Naive thymus-derived CD4-positive, alpha-beta T cell (primary cell): ENCODE measurements at regions of chr11 and their contacts with region 1.

Region 1: DNA sequence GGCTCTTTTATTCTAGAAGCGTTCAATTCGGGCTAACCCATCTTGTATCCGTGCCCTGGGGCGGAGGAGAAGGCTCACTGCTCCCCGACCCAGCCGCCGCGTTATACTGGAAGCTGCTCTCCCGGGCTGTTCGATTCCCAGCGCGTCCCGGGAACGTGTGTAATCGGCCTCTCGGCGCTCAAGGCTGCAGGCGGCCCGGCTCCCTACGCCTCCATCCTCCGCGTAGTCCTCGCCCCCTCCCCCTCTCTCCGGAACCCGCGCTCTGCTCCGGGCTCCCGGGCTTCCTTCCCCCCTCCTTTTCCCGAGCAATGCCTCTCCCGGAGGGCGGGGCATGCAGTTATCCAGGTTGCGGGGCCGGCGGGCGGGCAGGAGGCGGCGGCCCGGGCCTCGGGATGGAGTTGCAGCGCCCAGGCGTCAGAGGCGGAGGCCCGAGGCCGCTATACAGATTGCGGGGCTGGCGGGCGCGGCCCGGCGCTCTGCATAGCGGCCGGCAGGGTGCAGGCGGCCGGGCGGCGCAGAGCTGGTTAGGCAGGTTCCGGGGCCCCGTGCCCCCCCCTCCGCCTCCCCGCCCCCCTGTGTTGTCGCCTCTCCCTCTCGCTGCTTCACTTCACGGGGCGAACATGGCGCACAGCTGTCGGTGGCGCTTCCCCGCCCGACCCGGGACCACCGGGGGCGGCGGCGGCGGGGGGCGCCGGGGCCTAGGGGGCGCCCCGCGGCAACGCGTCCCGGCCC is at the start of gene KMT2A:
- DNase-seq: peak; percentile 89 to 100 (median 96)
- ATAC-seq: peak; percentile 94
- H3K4me3 ChIP-seq: peak within 1 kb of the TSS; percentile 91
- H3K4me3 Mint-ChIP-seq: peak within 1 kb of the TSS; percentile 89 to 97 (median 96)
- H3K27ac ChIP-seq: peak within 1 kb of the TSS; percentile 99
- H3K27ac Mint-ChIP-seq: peak within 1 kb of the TSS; percentile 91 to 99 (median 95)
- H3K4me1 ChIP-seq: peaks cover 24 to 28% of the 10 kb centered on the region in 2 donors
- H3K4me1 Mint-ChIP-seq: peaks cover 36 to 45% (median 38%) of the 10 kb centered on the region in 7 donors
- H3K27me3 ChIP-seq: no peaks in the 10 kb centered on the region
- H3K27me3 Mint-ChIP-seq: peaks cover 0 to 8% (median 0%) of the 10 kb centered on the region in 5 donors
- total RNA-seq, gene KMT2A: 140 to 192 (median 161) TPM

Region 2: GRCh38 chr11:118287006-118287405 is 149.1 kb before region 1 on chr11:
- CTCF ChIA-PET with region 1: no interaction called
- POLR2A ChIA-PET with region 1: no interaction called
- intact Hi-C with region 1: no loop called
- DNase-seq: no peak
- ATAC-seq: no peak
- H3K4me3 ChIP-seq: no peak overlapping the region
- H3K4me3 Mint-ChIP-seq: no peak overlapping the region
- H3K27ac ChIP-seq: no peak overlapping the region
- H3K27ac Mint-ChIP-seq: no peak overlapping the region
- H3K4me1 ChIP-seq: peaks cover 0 to 10% of the 10 kb centered on the region in 2 donors
- H3K4me1 Mint-ChIP-seq: peaks cover 24 to 39% (median 31%) of the 10 kb centered on the region in 7 donors
- H3K27me3 ChIP-seq: no peaks in the 10 kb centered on the region
- H3K27me3 Mint-ChIP-seq: no peaks in the 10 kb centered on the region

Region 3: GRCh38 chr11:118304568-118305248 is 131.4 kb before region 1 on chr11 and contains the start of gene CD3E:
- CTCF ChIA-PET with region 1: no interaction called
- POLR2A ChIA-PET with region 1: interaction called, 4 read pairs
- intact Hi-C with region 1: loop called (anchors 2 kb)
- DNase-seq: peak; percentile 31 to 83 (median 79)
- ATAC-seq: peak; percentile 83
- H3K4me3 ChIP-seq: peak within 1 kb of the TSS; percentile 88
- H3K4me3 Mint-ChIP-seq: peak within 1 kb of the TSS; percentile 95 to 100 (median 99)
- H3K27ac ChIP-seq: peak within 1 kb of the TSS; percentile 92
- H3K27ac Mint-ChIP-seq: peak within 1 kb of the TSS; percentile 97 to 100 (median 100)
- H3K4me1 ChIP-seq: peaks cover 41 to 62% of the 10 kb centered on the region in 2 donors
- H3K4me1 Mint-ChIP-seq: peaks cover 54 to 91% (median 78%) of the 10 kb centered on the region in 7 donors
- H3K27me3 ChIP-seq: no peaks in the 10 kb centered on the region
- H3K27me3 Mint-ChIP-seq: no peaks in the 10 kb centered on the region
- total RNA-seq, gene CD3E: 392 to 706 (median 670) TPM

Region 4: GRCh38 chr11:118396097-118396501 is 40.0 kb before region 1 on chr11:
- CTCF ChIA-PET with region 1: interaction called, 4 read pairs
- POLR2A ChIA-PET with region 1: interaction called, 31 read pairs
- intact Hi-C with region 1: loop called (anchors 1 kb)
- DNase-seq: peak in 1 of 9 donors; percentile 25
- ATAC-seq: no peak
- H3K4me3 ChIP-seq: no peak overlapping the region
- H3K4me3 Mint-ChIP-seq: peak overlapping the region in 3 of 10 donors; percentile 30 to 72 (median 55)
- H3K27ac ChIP-seq: peak overlapping the region; percentile 49
- H3K27ac Mint-ChIP-seq: peak overlapping the region; percentile 58 to 100 (median 97)
- H3K4me1 ChIP-seq: peaks cover 26 to 43% of the 10 kb centered on the region in 2 donors
- H3K4me1 Mint-ChIP-seq: peaks cover 18 to 61% (median 29%) of the 10 kb centered on the region in 7 donors
- H3K27me3 ChIP-seq: no peaks in the 10 kb centered on the region
- H3K27me3 Mint-ChIP-seq: no peaks in the 10 kb centered on the region

Region 5: DNA sequence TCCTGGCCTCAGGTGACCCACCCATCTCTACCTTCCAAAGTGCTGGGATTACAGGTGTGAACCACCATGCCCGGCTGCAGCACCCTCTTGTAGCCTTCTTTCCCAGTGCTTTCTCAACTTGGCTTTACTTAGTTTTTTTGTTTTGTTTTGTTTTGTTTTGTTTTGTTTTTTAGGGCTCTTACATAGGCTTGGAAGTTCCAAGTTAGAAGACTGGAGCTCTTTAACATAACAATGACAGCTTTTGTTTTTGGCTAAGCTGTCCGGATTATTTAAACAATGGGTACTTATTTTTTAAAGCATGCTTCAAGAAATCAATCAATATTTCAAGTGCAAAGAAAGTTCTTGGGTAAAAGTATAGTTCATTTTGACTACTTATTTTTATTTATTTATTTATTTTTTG is 26.1 kb after region 1 on chr11:
- CTCF ChIA-PET with region 1: interaction called, 5 read pairs
- POLR2A ChIA-PET with region 1: interaction called, 10 read pairs
- intact Hi-C with region 1: loop called in 1 of 2 experiments (anchors 5 kb)
- DNase-seq: no peak
- ATAC-seq: no peak
- H3K4me3 ChIP-seq: no peak overlapping the region
- H3K4me3 Mint-ChIP-seq: peak overlapping the region in 2 of 10 donors; percentile 23 to 29
- H3K27ac ChIP-seq: no peak overlapping the region
- H3K27ac Mint-ChIP-seq: peak overlapping the region in 2 of 9 donors; percentile 62 to 75
- H3K4me1 ChIP-seq: peaks cover 3 to 11% of the 10 kb centered on the region in 2 donors
- H3K4me1 Mint-ChIP-seq: peaks cover 20 to 67% (median 55%) of the 10 kb centered on the region in 7 donors
- H3K27me3 ChIP-seq: no peaks in the 10 kb centered on the region
- H3K27me3 Mint-ChIP-seq: no peaks in the 10 kb centered on the region

Region 6: GRCh38 chr11:118560806-118561205 is 124.7 kb after region 1 on chr11:
- CTCF ChIA-PET with region 1: no interaction called
- POLR2A ChIA-PET with region 1: no interaction called
- intact Hi-C with region 1: no loop called
- DNase-seq: no peak
- ATAC-seq: no peak
- H3K4me3 ChIP-seq: no peak overlapping the region
- H3K4me3 Mint-ChIP-seq: no peak overlapping the region
- H3K27ac ChIP-seq: no peak overlapping the region
- H3K27ac Mint-ChIP-seq: peak overlapping the region in 1 of 9 donors; percentile 45
- H3K4me1 ChIP-seq: no peaks in the 10 kb centered on the region
- H3K4me1 Mint-ChIP-seq: peaks cover 9 to 25% (median 16%) of the 10 kb centered on the region in 7 donors
- H3K27me3 ChIP-seq: no peaks in the 10 kb centered on the region
- H3K27me3 Mint-ChIP-seq: no peaks in the 10 kb centered on the region

Region 7: DNA sequence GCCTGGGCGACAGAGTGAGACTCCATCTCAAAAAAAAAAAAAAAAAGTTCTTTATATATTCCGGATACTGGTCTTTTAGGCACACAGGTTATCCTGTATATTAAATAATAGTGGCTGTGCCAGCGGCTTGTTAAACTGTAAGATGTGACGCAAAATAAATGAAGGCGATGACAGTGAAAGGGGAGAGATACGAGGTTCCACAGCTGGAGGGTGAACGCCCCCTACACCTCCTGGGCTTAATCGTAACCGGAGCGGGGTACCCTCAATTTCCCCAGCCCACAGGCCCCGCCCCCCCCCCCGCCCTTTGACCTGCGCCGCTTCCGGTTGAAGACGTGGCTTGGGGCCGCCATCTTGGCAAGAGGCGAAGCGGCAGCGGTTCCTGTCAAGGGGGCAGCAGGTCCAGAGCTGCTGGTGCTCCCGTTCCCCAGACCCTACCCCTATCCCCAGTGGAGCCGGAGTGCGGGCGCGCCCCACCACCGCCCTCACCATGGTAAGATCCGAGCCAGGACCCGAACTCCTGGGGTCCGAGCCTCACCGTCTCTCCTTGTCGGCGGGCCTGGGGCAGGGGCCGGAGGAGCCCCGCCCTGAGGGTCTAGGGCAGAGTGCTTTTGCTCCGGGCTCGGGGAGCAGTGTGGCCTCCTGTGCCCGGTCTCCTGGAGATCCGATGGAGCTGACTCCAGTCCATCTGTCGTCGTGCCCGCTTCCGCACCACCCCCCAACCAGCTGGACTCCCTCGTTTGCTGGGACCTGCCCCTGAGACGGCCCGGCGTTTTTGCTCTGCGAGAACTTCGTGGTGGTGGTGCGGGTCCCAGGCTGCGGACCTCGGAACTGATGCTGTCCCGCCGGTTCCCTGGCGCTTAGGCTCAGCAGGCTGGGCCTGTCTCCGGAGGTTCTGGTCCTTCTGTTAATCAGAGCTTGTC is 136.3 kb after region 1 on chr11 and contains the start of gene ARCN1:
- CTCF ChIA-PET with region 1: no interaction called
- POLR2A ChIA-PET with region 1: interaction called, 9 read pairs
- intact Hi-C with region 1: loop called in 1 of 2 experiments (anchors 2 kb)
- DNase-seq: peak; percentile 58 to 82 (median 79)
- ATAC-seq: peak; percentile 94
- H3K4me3 ChIP-seq: peak within 1 kb of the TSS; percentile 98
- H3K4me3 Mint-ChIP-seq: peak within 1 kb of the TSS; percentile 83 to 99 (median 96)
- H3K27ac ChIP-seq: peak within 1 kb of the TSS; percentile 100
- H3K27ac Mint-ChIP-seq: peak within 1 kb of the TSS; percentile 92 to 98 (median 98)
- H3K4me1 ChIP-seq: peaks cover 26 to 36% of the 10 kb centered on the region in 2 donors
- H3K4me1 Mint-ChIP-seq: peaks cover 35 to 58% (median 50%) of the 10 kb centered on the region in 7 donors
- H3K27me3 ChIP-seq: no peaks in the 10 kb centered on the region
- H3K27me3 Mint-ChIP-seq: no peaks in the 10 kb centered on the region
- total RNA-seq, gene ARCN1: 71.2 to 134 (median 115) TPM

Region 8: GRCh38 chr11:119121008-119121810 is 685.1 kb after region 1 on chr11 and contains the start of gene HINFP:
- CTCF ChIA-PET with region 1: no interaction called
- POLR2A ChIA-PET with region 1: no interaction called
- intact Hi-C with region 1: loop called in 1 of 2 experiments (anchors 5 kb)
- DNase-seq: peak; percentile 92 to 100 (median 98)
- ATAC-seq: peak; percentile 99
- H3K4me3 ChIP-seq: peak within 1 kb of the TSS; percentile 71
- H3K4me3 Mint-ChIP-seq: peak within 1 kb of the TSS; percentile 86 to 98 (median 94)
- H3K27ac ChIP-seq: peak within 1 kb of the TSS; percentile 85
- H3K27ac Mint-ChIP-seq: peak within 1 kb of the TSS; percentile 78 to 98 (median 95)
- H3K4me1 ChIP-seq: peaks cover 17 to 23% of the 10 kb centered on the region in 2 donors
- H3K4me1 Mint-ChIP-seq: peaks cover 34 to 58% (median 50%) of the 10 kb centered on the region in 7 donors
- H3K27me3 ChIP-seq: no peaks in the 10 kb centered on the region
- H3K27me3 Mint-ChIP-seq: no peaks in the 10 kb centered on the region
- total RNA-seq, gene HINFP: 30.7 to 79.7 (median 42.7) TPM

Region 9: DNA sequence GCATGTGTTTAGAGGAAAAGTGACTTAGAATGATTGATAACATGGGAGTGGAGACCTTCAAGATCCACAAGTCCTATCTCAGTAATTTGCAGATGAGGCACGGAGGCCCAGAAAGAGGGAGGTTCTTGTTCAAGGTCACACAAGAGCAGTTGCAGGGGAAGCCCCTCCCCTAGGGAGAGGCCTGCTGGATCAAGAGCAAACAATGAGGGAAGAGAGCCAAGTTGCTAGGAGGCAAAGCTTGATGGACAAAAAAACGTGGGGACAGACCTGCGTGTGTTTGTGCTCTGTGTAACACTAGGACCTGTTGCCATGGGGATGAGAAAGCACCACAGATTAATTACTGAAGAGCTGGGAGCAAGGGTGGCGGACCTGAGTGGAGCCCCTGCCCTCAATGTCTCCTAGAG is 916.8 kb after region 1 on chr11:
- CTCF ChIA-PET with region 1: no interaction called
- POLR2A ChIA-PET with region 1: no interaction called
- intact Hi-C with region 1: no loop called
- DNase-seq: no peak
- ATAC-seq: no peak
- H3K4me3 ChIP-seq: no peak overlapping the region
- H3K4me3 Mint-ChIP-seq: no peak overlapping the region
- H3K27ac ChIP-seq: no peak overlapping the region
- H3K27ac Mint-ChIP-seq: no peak overlapping the region
- H3K4me1 ChIP-seq: no peaks in the 10 kb centered on the region
- H3K4me1 Mint-ChIP-seq: peaks cover 0 to 18% (median 5%) of the 10 kb centered on the region in 7 donors
- H3K27me3 ChIP-seq: no peaks in the 10 kb centered on the region
- H3K27me3 Mint-ChIP-seq: peaks cover 16 to 57% (median 36%) of the 10 kb centered on the region in 5 donors